HEK293T (cell line): ENCODE measurements at regions of chr14 and their contacts with region 1.

Region 1: GRCh38 chr14:37172024-37172869 is at the start of gene SLC25A21:
- DNase-seq: peak; percentile 85

Region 2: DNA sequence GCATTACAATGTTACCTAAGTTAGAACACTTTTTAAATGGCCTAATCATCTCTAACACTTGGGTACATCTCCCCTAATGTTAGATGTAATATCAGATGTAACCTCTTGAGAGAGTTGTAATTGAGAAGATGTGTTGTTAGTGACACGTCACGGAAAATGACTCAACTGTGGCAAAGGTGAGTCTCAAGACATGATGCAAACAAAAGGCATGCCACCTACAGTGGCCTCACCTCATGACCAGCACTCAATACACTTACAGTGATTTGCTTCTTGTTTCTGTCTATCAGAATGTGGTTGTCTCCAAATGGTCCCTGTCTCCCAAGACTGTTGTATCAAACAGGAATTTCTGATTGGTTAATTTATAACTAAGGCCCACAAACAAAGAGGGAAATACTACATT is 91.0 kb before region 1 on chr14:
- CTCF ChIA-PET with region 1: no interaction called
- POLR2A ChIA-PET with region 1: no interaction called
- DNase-seq: no peak

Region 3: GRCh38 chr14:37197421-37198272 is 25.4 kb after region 1 on chr14 and contains the start of gene MIPOL1:
- CTCF ChIA-PET with region 1: interaction called, 3 read pairs
- POLR2A ChIA-PET with region 1: interaction called, 18 read pairs
- DNase-seq: peak; percentile 85

Region 4: GRCh38 chr14:37241198-37241597 is 69.0 kb after region 1 on chr14:
- CTCF ChIA-PET with region 1: no interaction called
- POLR2A ChIA-PET with region 1: no interaction called
- DNase-seq: no peak